MCF 10A (cell line): ENCODE measurements at regions of chr5 and their contacts with region 1.

Region 1: DNA sequence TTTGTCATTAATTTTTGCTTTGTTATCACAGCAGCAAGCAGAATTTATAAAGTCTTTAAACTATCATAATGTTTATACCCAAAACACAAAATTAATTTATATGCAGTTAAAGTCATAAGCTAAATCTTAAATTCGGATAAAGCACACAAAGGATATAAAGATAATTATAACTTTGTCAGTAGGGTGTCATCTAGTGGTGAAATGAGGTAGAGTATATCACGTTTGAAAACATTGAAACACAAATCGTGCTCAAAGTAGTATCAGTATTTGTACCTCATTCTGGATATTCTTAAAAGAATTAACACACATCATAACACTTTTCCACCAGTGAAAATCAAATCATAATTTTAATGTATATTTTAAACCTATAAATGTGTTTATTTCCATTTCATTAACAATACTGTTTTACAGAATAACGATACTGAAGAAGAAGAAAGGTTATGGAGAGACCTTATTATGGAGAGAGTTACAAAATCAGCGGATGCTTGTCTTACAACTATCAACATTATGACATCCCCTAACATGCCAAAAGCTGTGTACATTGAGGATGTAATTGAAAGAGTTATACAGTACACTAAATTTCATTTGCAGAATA is 129.5 kb downstream of the NIPBL start:
- DNase-seq: peak; percentile 23
- H3K4me3 Mint-ChIP-seq: no peak overlapping the region
- H3K27ac Mint-ChIP-seq: no peak overlapping the region
- H3K4me1 Mint-ChIP-seq: no peaks in the 10 kb centered on the region
- H3K27me3 Mint-ChIP-seq: no peaks in the 10 kb centered on the region
- CTCF ChIP-seq: peak; percentile 51

Region 2: GRCh38 chr5:36657563-36657995 is 348.5 kb before region 1 on chr5:
- CTCF ChIA-PET with region 1: no interaction called
- POLR2A ChIA-PET with region 1: no interaction called
- intact Hi-C with region 1: no loop called
- DNase-seq: peak; percentile 100
- H3K4me3 Mint-ChIP-seq: peak overlapping the region; percentile 51
- H3K27ac Mint-ChIP-seq: peak overlapping the region; percentile 95
- H3K4me1 Mint-ChIP-seq: peaks cover 20% of the 10 kb centered on the region
- H3K27me3 Mint-ChIP-seq: no peaks in the 10 kb centered on the region
- CTCF ChIP-seq: no peak

Region 3: DNA sequence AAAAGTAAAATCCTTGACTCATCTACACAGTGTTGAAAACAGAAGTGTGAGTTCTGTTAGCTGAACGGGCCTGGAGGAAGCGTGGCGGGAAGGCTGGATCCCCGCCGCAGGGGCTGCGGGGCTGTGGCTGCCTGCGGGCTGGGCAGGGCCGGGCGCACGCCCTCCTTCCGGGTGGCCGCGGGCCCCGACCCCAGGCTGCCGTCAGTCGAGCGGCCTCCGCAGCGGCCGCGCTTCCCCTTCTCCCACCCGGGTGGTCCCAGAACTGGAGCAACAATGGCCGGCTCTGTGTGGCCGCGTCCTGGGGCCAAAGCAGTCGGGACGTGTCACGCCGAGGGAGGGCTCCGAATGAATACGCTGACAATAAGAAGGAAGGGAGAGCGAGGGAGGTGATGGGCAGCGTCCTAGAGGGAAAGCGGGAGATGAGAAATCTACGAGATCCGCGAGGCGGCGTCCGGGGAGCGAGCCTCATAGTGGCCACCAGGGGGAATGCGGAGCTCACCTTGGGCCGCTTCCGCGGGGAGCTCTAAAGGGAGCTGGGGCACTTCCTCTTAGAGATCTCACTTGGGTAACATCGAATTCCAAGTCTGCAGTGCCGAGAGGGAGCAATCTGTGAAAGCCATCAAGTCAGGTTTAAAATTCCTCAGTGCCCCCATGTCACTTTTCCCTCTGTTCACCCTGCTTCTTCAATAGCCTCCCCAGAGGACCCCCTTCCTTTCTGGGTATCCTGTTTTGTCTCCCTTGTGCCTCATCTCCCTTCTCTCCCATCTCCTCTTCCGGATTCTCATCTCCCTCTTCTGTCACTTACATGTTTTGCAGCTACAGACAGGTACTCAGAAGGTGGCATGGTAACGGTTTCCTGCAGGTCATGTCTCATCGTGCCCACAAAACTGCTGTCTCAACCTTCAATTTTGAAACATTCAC is 315.7 kb before region 1 on chr5:
- CTCF ChIA-PET with region 1: no interaction called
- POLR2A ChIA-PET with region 1: no interaction called
- intact Hi-C with region 1: no loop called
- DNase-seq: peak; percentile 89
- H3K4me3 Mint-ChIP-seq: peak overlapping the region; percentile 71
- H3K27ac Mint-ChIP-seq: peak overlapping the region; percentile 21
- H3K4me1 Mint-ChIP-seq: peaks cover 14% of the 10 kb centered on the region
- H3K27me3 Mint-ChIP-seq: no peaks in the 10 kb centered on the region
- CTCF ChIP-seq: peak; percentile 62

Region 4: GRCh38 chr5:36734422-36734821 is 271.6 kb before region 1 on chr5:
- CTCF ChIA-PET with region 1: interaction called, 40 read pairs
- POLR2A ChIA-PET with region 1: interaction called, 4 read pairs
- intact Hi-C with region 1: loop called (anchors 1 kb)
- DNase-seq: peak; percentile 57
- H3K4me3 Mint-ChIP-seq: no peak overlapping the region
- H3K27ac Mint-ChIP-seq: no peak overlapping the region
- H3K4me1 Mint-ChIP-seq: no peaks in the 10 kb centered on the region
- H3K27me3 Mint-ChIP-seq: peaks cover 19% of the 10 kb centered on the region
- CTCF ChIP-seq: peak; percentile 29

Region 5: GRCh38 chr5:36744773-36745589 is 261.1 kb before region 1 on chr5:
- CTCF ChIA-PET with region 1: interaction called, 8 read pairs
- POLR2A ChIA-PET with region 1: interaction called, 3 read pairs
- intact Hi-C with region 1: loop called (anchors 1 kb)
- DNase-seq: peak; percentile 72
- H3K4me3 Mint-ChIP-seq: peak overlapping the region; percentile 85
- H3K27ac Mint-ChIP-seq: peak overlapping the region; percentile 32
- H3K4me1 Mint-ChIP-seq: peaks cover 17% of the 10 kb centered on the region
- H3K27me3 Mint-ChIP-seq: peaks cover 28% of the 10 kb centered on the region
- CTCF ChIP-seq: no peak

Region 6: GRCh38 chr5:36965179-36965578 is 40.9 kb before region 1 on chr5:
- CTCF ChIA-PET with region 1: no interaction called
- POLR2A ChIA-PET with region 1: no interaction called
- intact Hi-C with region 1: no loop called
- DNase-seq: no peak
- H3K4me3 Mint-ChIP-seq: no peak overlapping the region
- H3K27ac Mint-ChIP-seq: no peak overlapping the region
- H3K4me1 Mint-ChIP-seq: no peaks in the 10 kb centered on the region
- H3K27me3 Mint-ChIP-seq: no peaks in the 10 kb centered on the region
- CTCF ChIP-seq: no peak